Left cardiac atrium (tissue), 4 donors: ENCODE measurements at regions of chr15 and their contacts with region 1.

Region 1: GRCh38 chr15:69887009-69887408 is 210.7 kb downstream of the TLE3 start:
- DNase-seq: no peak
- ATAC-seq: no peak

Region 2: DNA sequence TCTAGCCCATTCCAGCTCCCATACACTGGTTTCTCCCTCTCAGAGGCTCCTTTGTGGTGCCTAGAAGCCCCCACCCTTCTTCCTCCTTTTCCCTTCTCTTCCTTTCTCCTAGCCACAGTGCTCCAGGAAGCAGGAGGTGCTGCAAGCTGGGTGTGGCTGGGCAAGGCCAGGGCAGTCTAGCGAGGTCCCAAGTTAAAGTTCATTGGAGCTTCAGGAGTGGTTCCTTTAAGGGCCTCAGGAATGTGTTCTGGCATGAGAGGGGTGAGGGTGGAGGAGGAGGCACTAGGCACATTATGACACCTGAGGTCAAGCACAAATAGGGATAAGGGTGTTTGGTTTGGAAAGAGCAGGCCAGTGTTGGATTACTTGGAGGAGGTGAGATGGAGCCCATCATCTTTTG is 48.1 kb before region 1 on chr15:
- intact Hi-C with region 1: loop called in 1 of 2 experiments (anchors 2 kb)
- DNase-seq: no peak
- ATAC-seq: no peak

Region 3: GRCh38 chr15:69997697-69998273 is 110.8 kb after region 1 on chr15:
- intact Hi-C with region 1: no loop called
- DNase-seq: peak; percentile 57
- ATAC-seq: peak; percentile 63 to 80